PC-9 (cell line): ENCODE measurements at regions of chr11 and their contacts with region 1.

Region 1: DNA sequence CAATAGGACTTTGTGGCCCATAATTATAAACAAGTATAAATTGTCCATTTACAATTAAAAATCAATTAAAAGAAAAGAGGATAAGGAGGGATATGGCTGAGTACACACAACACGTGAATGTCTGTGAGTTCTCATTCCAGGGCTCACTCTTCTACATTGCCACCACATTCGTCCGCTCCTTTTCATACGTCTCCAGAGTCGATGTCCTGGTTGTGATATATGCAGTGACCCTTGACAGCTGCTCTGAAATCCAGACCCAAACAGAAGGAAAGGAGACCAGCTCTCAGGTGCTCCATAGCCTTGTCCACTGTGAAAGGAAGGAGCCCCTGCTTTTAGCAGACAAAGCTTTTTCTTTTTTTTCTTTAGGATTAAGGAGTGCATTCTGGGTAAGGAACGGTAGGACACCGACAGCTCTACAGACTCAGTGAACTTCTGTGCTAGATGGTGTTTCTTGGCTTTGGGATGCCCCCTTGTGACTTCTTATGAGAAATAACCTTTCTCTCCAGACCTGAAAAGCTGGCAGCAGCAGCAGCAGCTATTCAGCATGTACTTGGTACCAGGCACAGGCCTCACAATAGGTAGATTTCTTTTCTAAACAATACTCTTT is 19.7 kb upstream of the DNAJB13 start:
- DNase-seq: peak; percentile 34 to 43
- H3K4me3 ChIP-seq: no peak overlapping the region
- H3K27ac ChIP-seq: no peak overlapping the region
- H3K4me1 ChIP-seq: no peaks in the 10 kb centered on the region
- H3K27me3 ChIP-seq: no peaks in the 10 kb centered on the region
- CTCF ChIP-seq: peak; percentile 66

Region 2: DNA sequence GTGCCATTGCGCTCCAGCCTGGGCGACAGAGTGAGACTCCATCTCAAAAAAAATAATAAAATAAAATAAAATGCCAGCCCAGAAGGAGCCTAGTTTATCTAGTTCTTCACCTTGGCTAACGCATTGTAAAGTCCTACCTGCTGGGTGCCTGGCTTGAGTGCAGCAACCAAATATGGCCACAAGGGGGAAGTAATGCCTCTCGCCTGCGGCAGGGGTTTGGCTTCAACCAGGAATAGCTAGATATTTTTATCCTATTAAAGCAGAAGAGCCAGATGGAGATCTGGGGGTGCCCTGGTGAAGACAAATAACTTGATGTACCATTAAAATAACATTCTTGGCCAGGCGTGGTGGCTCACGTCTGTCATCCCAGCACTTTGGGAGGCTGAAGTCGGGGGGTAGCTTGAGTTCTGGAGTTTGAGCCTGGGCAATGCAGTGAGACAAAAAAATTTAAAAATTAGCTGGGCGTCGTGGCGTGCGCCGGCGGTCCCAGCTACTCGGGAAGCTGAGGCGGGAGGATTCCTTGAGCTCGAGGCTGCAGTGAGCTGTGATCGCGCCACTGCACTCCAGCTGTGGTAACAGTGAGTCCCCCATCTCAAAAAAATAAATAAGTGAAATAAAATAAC is 305.3 kb before region 1 on chr11:
- CTCF ChIA-PET with region 1: interaction called, 12 read pairs
- POLR2A ChIA-PET with region 1: no interaction called
- intact Hi-C with region 1: loop called (anchors 2 kb)
- DNase-seq: peak; percentile 71 to 84
- H3K4me3 ChIP-seq: no peak overlapping the region; the same call in 1 of the 2 replicates
- H3K27ac ChIP-seq: no peak overlapping the region
- H3K4me1 ChIP-seq: 0 out of 2 replicates have a peak, but pooled peaks cover 4% of the 10 kb centered on the region
- H3K27me3 ChIP-seq: 0 out of 2 replicates have a peak, but pooled peaks cover 3% of the 10 kb centered on the region
- CTCF ChIP-seq: peak; percentile 96

Region 3: GRCh38 chr11:73889019-73889418 is 42.1 kb before region 1 on chr11:
- CTCF ChIA-PET with region 1: no interaction called
- POLR2A ChIA-PET with region 1: no interaction called
- intact Hi-C with region 1: no loop called
- DNase-seq: peak in 1 of 2 experiments; percentile 78
- H3K4me3 ChIP-seq: no peak overlapping the region
- H3K27ac ChIP-seq: peak overlapping the region; percentile 21; the same call in 1 of the 2 replicates
- H3K4me1 ChIP-seq: peaks cover 17% of the 10 kb centered on the region
- H3K27me3 ChIP-seq: no peaks in the 10 kb centered on the region
- CTCF ChIP-seq: no peak

Region 4: DNA sequence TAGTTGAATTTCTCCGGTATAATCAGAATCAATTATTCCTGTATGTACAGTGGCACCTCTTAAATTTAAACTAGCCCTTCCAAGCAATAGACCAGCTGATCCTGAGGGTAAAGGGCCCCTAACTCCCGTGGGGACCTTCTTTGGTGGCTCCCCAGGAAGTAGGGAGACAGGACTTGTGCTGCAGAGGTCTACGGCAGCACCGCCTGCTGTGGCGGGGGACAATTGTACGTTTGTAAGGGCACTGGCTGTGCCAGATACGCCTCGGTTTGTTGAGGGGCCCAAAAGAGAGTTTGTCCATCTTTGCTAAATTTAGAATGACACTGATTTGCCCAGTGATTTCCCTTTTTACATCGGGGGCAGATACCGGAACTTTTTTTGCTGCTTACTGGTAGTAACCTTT is 13.8 kb after region 1 on chr11:
- CTCF ChIA-PET with region 1: interaction called, 10 read pairs
- POLR2A ChIA-PET with region 1: interaction called, 3 read pairs
- intact Hi-C with region 1: no loop called
- DNase-seq: peak in 1 of 2 experiments; percentile 28
- H3K4me3 ChIP-seq: no peak overlapping the region
- H3K27ac ChIP-seq: no peak overlapping the region
- H3K4me1 ChIP-seq: no peaks in the 10 kb centered on the region
- H3K27me3 ChIP-seq: no peaks in the 10 kb centered on the region
- CTCF ChIP-seq: no peak